ENCODE measurements at regions of chr5 and their contacts with region 1.

Region 1: DNA sequence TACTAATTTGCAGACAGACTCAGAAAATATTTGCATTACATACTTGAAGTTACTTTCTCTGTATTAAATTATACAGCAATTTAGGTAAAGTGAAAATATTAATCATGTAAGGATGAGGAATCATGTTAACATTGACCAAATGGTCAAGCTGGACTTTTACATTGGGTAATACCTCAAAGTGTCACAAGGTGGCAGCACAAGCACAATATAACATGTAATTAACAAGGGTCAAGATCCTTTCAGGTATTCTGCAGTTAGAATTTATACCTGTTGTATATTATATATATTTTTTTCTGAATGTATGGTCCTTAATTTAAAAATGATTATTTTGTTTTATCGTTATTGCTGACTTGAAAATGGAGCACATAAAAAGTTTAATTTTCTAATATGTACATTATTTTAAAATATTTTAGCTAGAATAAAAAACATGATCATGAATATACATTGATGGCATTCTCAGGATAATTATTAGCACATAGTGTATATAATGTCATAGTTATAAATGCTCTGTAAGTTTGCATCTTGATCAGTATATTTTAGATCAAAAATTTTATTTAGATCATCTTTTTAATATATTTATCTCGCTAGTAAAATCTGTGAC is 8.6 kb downstream of the HAPLN1 start:
- DNase-seq: no peak
- H3K4me3 ChIP-seq: no peak overlapping the region
- H3K27ac ChIP-seq: no peak overlapping the region
- H3K27me3 ChIP-seq: peaks cover 4% of the 10 kb centered on the region
- CTCF ChIP-seq: peak; percentile 74

Region 2: DNA sequence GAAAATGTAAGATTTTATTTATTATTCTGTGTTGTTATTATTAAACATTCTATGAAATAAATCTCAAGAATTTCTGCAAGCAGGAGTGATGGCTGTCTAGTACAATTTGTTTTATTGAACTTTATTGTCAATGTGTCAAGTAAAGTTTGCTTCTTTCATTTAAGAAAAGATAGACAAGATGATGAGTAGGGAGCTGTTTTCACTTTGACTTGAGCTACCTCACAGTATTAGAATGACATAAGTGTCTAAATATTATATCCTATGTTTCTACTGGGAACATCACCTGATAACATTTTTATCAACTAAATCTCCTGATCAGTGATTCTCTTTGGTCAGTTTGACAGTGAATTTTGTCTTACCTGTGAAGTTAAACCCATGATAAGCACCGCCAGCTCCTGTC is 685.3 kb after region 1 on chr5:
- CTCF ChIA-PET with region 1: no interaction called
- POLR2A ChIA-PET with region 1: no interaction called
- DNase-seq: no peak
- H3K4me3 ChIP-seq: no peak overlapping the region
- H3K27ac ChIP-seq: no peak overlapping the region
- H3K27me3 ChIP-seq: no peaks in the 10 kb centered on the region
- CTCF ChIP-seq: no peak

Region 3: GRCh38 chr5:85049020-85049419 is 1336.9 kb after region 1 on chr5:
- CTCF ChIA-PET with region 1: interaction called, 15 read pairs
- POLR2A ChIA-PET with region 1: no interaction called
- DNase-seq: peak; percentile 44
- H3K4me3 ChIP-seq: no peak overlapping the region
- H3K27ac ChIP-seq: no peak overlapping the region
- H3K27me3 ChIP-seq: no peaks in the 10 kb centered on the region
- CTCF ChIP-seq: peak; percentile 66

Measured in AG04450 (cell line).